ENCODE measurements at regions of chr19 and their contacts with region 1.

Region 1: DNA sequence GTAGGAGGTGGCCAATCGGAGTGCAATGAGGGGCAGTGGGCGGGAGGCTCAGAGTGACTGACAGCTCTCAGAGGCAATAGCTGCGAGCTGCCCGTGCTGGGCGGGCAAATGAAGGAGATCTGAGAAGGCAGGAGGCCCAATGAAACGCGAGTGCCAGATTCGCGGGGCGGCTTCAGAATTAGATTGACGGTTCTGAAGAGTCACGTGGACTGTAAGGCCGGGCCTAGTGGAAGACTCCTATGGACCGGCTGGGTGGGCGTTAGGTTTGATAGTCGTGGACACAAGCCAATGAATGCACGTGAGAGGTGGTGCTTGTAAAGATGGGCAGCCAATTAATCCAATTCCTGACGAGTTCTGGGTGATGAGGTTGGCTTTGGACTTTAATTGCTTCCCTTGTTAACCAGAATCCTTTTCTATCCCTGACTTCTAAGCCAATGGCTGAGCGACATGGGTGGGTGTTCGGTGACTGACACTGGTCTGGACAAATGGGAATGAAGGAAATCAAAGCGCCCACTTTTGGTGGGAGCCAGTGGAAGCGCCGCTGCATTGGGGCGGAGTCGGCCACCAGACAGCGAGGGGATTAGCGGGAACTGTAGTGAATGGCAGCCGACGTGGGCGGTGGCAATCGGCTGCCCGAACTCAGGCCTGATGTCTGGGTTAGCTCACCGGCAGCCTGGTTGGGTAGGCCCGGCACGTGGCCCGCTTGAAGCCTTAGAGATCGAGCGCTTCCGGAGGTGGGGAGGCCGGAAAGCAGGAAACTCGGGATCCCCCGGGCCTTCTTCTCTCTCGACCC is 524 bp upstream of the KHSRP start:
- DNase-seq: peak; percentile 100
- H3K4me3 Mint-ChIP-seq: peak overlapping the region; percentile 76
- H3K27ac Mint-ChIP-seq: peak overlapping the region; percentile 94
- H3K4me1 Mint-ChIP-seq: peaks cover 36% of the 10 kb centered on the region
- H3K27me3 Mint-ChIP-seq: no peaks in the 10 kb centered on the region

Region 2: DNA sequence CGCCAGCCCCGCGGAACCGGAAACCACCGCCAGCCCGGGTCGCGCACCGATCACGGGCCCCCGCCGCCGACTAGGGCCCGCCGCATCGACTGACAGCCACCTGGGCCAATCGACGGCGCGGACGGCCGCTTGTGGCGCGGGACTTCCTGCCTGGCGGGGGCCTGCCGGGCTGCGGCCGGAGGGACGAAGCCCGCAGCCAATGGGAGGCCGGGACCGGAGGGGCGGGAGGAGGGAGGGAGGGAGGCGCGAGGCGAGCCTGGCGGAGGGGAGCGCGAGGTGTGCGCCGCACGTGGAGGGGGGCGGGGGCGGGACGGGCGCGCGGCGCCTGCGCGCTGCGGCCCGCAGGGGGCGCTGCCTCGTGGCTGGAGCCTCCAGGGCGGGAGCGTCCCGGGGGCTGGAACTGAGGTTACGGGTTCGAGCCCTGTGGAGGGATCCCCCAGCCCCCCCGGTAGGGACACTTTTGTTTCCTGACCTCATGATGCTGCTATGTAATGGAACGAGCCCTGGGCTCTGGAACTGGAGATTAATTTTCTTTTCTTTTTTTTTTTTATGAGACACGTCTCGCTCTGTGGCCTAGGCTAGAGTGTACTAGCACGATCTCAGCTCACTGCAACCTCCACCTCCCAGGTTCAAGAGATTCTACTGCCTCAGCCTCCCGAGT is 145.1 kb before region 1 on chr19 and contains the start of gene MLLT1:
- CTCF ChIA-PET with region 1: no interaction called
- intact Hi-C with region 1: loop called (anchors 1 kb)
- DNase-seq: peak; percentile 97
- H3K4me3 Mint-ChIP-seq: peak within 1 kb of the TSS; percentile 94
- H3K27ac Mint-ChIP-seq: peak within 1 kb of the TSS; percentile 87
- H3K4me1 Mint-ChIP-seq: peaks cover 33% of the 10 kb centered on the region
- H3K27me3 Mint-ChIP-seq: no peaks in the 10 kb centered on the region
- total RNA-seq, gene MLLT1: 30.6 to 31.3 TPM

Region 3: GRCh38 chr19:6362027-6362350 is 63.1 kb before region 1 on chr19:
- CTCF ChIA-PET with region 1: no interaction called
- intact Hi-C with region 1: loop called (anchors 1 kb)
- DNase-seq: no peak
- H3K4me3 Mint-ChIP-seq: peak overlapping the region; percentile 98
- H3K27ac Mint-ChIP-seq: peak overlapping the region; percentile 95
- H3K4me1 Mint-ChIP-seq: peaks cover 17% of the 10 kb centered on the region
- H3K27me3 Mint-ChIP-seq: no peaks in the 10 kb centered on the region

Region 4: GRCh38 chr19:6383188-6383587 is 41.9 kb before region 1 on chr19:
- CTCF ChIA-PET with region 1: no interaction called
- intact Hi-C with region 1: no loop called
- DNase-seq: no peak
- H3K4me3 Mint-ChIP-seq: no peak overlapping the region
- H3K27ac Mint-ChIP-seq: no peak overlapping the region
- H3K4me1 Mint-ChIP-seq: no peaks in the 10 kb centered on the region
- H3K27me3 Mint-ChIP-seq: no peaks in the 10 kb centered on the region

Region 5: DNA sequence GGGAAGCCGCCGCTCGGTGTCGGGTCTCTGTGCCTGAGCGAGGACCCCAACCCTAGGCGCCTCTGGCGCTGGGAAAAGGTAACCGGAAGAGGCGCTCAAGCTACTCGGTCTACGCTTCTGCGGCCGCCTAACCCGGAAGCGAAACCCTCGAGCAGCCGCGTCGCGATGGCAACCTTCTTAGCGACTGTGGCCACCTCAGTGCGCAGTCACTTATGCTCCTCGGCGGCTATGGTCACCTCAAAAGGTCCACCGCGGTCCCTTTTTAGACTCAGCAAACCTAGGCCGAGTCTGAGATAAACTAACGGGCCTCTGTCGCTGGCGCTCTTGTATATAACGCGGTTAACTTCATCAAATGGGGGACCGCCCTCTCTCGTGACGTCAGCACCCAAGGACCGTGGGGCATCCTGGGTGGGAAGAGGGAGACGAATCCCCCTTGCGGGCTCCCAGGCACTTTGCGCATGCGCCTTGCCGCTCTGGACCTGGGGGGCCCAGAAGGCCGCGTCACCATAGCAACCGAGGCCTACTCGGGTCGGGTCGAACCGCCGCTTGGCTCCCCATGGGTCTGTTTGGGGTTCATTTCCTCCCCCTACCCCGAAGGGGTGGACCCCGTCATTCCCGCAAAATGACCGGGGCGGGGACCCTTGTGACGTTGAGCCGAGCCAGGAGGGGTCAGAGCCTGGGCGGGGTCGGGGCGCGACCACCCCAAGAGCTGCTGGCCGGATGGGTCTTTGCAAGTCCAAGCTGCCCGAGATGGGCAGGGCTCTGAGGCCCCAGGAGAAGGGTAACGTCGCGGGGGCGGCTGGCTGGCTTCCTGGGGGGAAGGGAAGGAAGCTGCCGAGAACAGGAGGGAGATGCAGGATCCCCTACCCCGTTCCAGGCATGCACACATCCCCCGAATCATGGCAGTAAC is 31.8 kb before region 1 on chr19 and contains the start of gene GTF2F1:
- CTCF ChIA-PET with region 1: no interaction called
- intact Hi-C with region 1: loop called (anchors 1 kb)
- DNase-seq: peak; percentile 95
- H3K4me3 Mint-ChIP-seq: peak within 1 kb of the TSS; percentile 88
- H3K27ac Mint-ChIP-seq: peak within 1 kb of the TSS; percentile 92
- H3K4me1 Mint-ChIP-seq: peaks cover 16% of the 10 kb centered on the region
- H3K27me3 Mint-ChIP-seq: no peaks in the 10 kb centered on the region
- total RNA-seq, gene GTF2F1: 53.5 to 63.0 TPM

Region 6: DNA sequence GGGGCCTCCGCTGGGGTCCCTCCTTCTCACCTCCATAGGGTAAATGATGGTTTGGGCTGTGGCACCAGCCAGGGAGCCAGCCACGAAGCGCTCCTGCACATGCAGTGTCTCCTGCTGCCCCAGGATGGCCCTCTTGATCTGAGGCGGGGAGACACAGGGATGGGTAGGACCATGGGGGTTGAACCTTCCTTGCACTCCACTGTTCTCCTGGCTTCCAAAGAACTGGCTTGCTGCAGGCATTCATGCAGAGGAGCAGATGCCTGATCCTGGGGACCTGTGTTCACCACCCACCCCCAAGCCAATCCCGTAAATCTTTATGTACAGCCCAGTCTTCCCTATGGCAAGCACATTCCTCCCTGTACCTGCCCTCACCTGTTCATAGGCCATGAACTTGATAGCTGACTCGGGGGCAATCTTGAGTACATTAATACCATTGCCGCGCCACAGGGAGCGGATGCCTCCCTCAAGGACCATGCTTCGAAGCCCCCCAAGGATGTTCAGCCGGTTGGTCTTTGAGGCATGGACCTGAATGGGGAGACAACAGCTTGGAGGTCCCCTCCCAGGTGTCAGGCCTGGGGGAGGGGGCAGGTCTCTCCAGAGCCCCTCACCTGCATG is 28.9 kb after region 1 on chr19:
- CTCF ChIA-PET with region 1: no interaction called
- intact Hi-C with region 1: no loop called
- DNase-seq: no peak
- H3K4me3 Mint-ChIP-seq: no peak overlapping the region
- H3K27ac Mint-ChIP-seq: no peak overlapping the region
- H3K4me1 Mint-ChIP-seq: peaks cover 6% of the 10 kb centered on the region
- H3K27me3 Mint-ChIP-seq: no peaks in the 10 kb centered on the region

Region 7: GRCh38 chr19:6481541-6482342 is 56.6 kb after region 1 on chr19 and contains the start of gene DENND1C:
- CTCF ChIA-PET with region 1: no interaction called
- intact Hi-C with region 1: loop called (anchors 5 kb)
- DNase-seq: peak; percentile 86
- H3K4me3 Mint-ChIP-seq: peak within 1 kb of the TSS; percentile 95
- H3K27ac Mint-ChIP-seq: peak within 1 kb of the TSS; percentile 94
- H3K4me1 Mint-ChIP-seq: peaks cover 31% of the 10 kb centered on the region
- H3K27me3 Mint-ChIP-seq: no peaks in the 10 kb centered on the region
- total RNA-seq, gene DENND1C: 55.7 to 57.9 TPM

Region 8: DNA sequence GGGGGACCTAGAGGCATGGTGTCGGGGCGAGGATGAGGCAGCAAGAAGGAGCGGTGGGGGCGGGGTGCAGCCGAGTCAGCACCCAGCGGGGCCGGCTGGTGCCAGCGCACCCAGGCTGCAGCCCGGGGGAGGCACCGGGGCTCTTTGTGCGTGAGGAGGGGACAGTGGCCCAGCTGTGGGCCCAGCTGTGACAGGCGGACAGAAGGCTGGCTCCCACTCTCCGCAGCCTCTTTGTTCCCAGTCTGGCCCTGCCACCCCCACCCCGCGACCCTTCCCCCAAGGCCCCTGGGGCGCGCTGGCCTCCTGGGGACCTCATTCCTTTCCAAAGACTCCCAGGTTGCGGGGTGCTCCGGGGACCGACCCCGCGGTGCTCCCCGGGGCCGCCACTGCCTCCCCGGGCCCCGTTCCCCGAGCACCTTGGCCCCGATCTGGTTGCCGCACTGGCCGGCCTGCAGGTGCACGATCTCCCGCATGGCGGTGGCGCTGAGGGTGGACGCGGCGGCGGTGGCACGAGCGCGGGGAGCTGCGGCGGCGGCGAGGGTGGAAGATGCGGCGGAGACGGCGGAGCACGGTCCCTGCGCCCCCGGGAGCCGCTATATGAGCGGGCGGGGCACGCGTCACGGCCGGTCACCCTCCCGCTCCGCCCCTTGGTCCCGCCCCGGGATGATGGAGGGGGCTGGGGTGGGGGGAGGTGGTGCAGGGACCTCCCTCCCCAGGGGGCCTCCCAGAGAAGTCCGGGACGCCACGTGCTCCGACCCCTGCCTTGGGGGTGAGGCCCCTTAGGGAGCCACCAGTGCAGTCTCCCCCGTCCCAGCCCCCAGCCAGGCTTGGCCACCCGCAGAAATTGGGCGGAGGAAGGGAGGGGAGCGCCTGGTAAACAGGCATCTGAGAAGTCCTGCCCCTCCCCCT is 76.9 kb after region 1 on chr19 and contains the start of gene TUBB4A:
- CTCF ChIA-PET with region 1: no interaction called
- intact Hi-C with region 1: no loop called
- DNase-seq: peak; percentile 58
- H3K4me3 Mint-ChIP-seq: peak within 1 kb of the TSS; percentile 68
- H3K27ac Mint-ChIP-seq: no peak within 1 kb of the TSS
- H3K4me1 Mint-ChIP-seq: peaks cover 9% of the 10 kb centered on the region
- H3K27me3 Mint-ChIP-seq: peaks cover 5% of the 10 kb centered on the region
- total RNA-seq, gene TUBB4A: 6.4 to 7.0 TPM